ENCODE measurements at regions of chr17 and their contacts with region 1.

Region 1: GRCh38 chr17:79087428-79088143 is 13.0 kb downstream of the ENGASE start:
- DNase-seq: no peak
- H3K4me3 ChIP-seq: no peak overlapping the region
- H3K27ac ChIP-seq: no peak overlapping the region
- H3K4me1 ChIP-seq: peaks cover 14% of the 10 kb centered on the region
- H3K27me3 ChIP-seq: no peaks in the 10 kb centered on the region
- CTCF ChIP-seq: peak; percentile 76 to 93 (median 84)
- POLR2A ChIP-seq: no peak

Region 2: GRCh38 chr17:77227461-77228237 is 1859.9 kb before region 1 on chr17:
- intact Hi-C with region 1: no loop called
- DNase-seq: no peak
- H3K4me3 ChIP-seq: peak overlapping the region in 1 of 2 donors; percentile 25
- H3K27ac ChIP-seq: peak overlapping the region; percentile 59
- H3K4me1 ChIP-seq: no peaks in the 10 kb centered on the region
- H3K27me3 ChIP-seq: no peaks in the 10 kb centered on the region
- CTCF ChIP-seq: no peak
- POLR2A ChIP-seq: no peak

Region 3: GRCh38 chr17:78993241-78993956 is 94.2 kb before region 1 on chr17:
- intact Hi-C with region 1: no loop called
- DNase-seq: no peak
- H3K4me3 ChIP-seq: no peak overlapping the region
- H3K27ac ChIP-seq: no peak overlapping the region
- H3K4me1 ChIP-seq: peaks cover 25% of the 10 kb centered on the region
- H3K27me3 ChIP-seq: no peaks in the 10 kb centered on the region
- CTCF ChIP-seq: peak; percentile 44 to 55 (median 46)
- POLR2A ChIP-seq: no peak

Region 4: GRCh38 chr17:79393358-79394202 is 306.0 kb after region 1 on chr17:
- intact Hi-C with region 1: loop called (anchors 2 kb)
- DNase-seq: no peak
- H3K4me3 ChIP-seq: no peak overlapping the region
- H3K27ac ChIP-seq: no peak overlapping the region
- H3K4me1 ChIP-seq: no peaks in the 10 kb centered on the region
- H3K27me3 ChIP-seq: no peaks in the 10 kb centered on the region
- CTCF ChIP-seq: peak; percentile 56 to 69 (median 64)
- POLR2A ChIP-seq: no peak

Measured in vagina (tissue), 2 donors.